IMR-90 (cell line): ENCODE measurements at regions of chr3 and their contacts with region 1.

Region 1: DNA sequence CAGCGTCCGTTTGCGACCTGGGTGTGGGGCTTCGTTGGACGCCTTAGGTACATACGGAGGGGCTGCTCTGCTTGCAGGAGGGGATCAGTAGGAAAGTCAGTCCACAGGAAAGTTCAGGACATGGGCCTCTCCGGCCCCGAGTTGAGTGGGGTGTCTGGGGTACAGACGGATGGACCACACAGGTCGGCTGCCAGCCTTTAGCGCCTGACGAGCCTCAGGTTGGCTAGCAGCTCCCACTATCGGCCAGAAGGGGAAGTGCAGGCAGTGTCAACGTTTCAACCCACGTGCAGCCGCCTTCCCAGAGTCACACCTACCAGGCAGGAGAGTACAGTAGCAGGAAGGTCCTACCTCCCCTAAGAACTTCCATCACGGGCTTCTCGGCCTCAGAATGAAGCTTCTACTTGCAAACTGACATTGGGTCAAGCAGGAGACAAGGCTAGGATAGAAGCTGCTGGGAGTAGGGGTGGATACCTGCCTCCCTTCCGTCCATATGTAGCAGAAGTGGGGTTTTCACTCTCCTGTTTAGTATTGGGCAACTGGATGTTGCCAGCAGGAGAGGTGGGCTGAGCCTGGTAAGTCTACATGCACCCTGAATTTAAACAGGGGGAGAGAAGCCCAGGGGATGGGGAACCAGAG is 1.8 kb upstream of the SCN5A start:
- DNase-seq: peak; percentile 52
- ATAC-seq: peak; percentile 59
- H3K4me3 ChIP-seq: no peak overlapping the region
- H3K27ac ChIP-seq: no peak overlapping the region
- H3K4me1 ChIP-seq: peaks cover 3% of the 10 kb centered on the region
- H3K27me3 ChIP-seq: peaks cover 11% of the 10 kb centered on the region
- CTCF ChIP-seq: peak; percentile 93
- POLR2A ChIP-seq: no peak
- RAD21 ChIP-seq: peak; percentile 85

Region 2: GRCh38 chr3:38354588-38355330 is 296.5 kb before region 1 on chr3:
- CTCF ChIA-PET with region 1: no interaction called
- POLR2A ChIA-PET with region 1: no interaction called
- dilution Hi-C with region 1: no loop called
- in situ Hi-C with region 1: no loop called
- intact Hi-C with region 1: loop called (anchors 10 kb)
- DNase-seq: peak; percentile 68
- ATAC-seq: no peak
- H3K4me3 ChIP-seq: no peak overlapping the region
- H3K27ac ChIP-seq: no peak overlapping the region
- H3K4me1 ChIP-seq: no peaks in the 10 kb centered on the region
- H3K27me3 ChIP-seq: no peaks in the 10 kb centered on the region
- CTCF ChIP-seq: no peak
- POLR2A ChIP-seq: no peak
- RAD21 ChIP-seq: no peak

Region 3: GRCh38 chr3:38496131-38496910 is 155.0 kb before region 1 on chr3 and contains the start of gene EXOG:
- CTCF ChIA-PET with region 1: interaction called, 5 read pairs
- POLR2A ChIA-PET with region 1: no interaction called
- dilution Hi-C with region 1: no loop called
- in situ Hi-C with region 1: no loop called
- intact Hi-C with region 1: loop called (anchors 1 kb)
- DNase-seq: peak; percentile 89
- ATAC-seq: peak; percentile 85
- H3K4me3 ChIP-seq: peak within 1 kb of the TSS; percentile 91
- H3K27ac ChIP-seq: peak within 1 kb of the TSS; percentile 91
- H3K4me1 ChIP-seq: peaks cover 11% of the 10 kb centered on the region
- H3K27me3 ChIP-seq: no peaks in the 10 kb centered on the region
- CTCF ChIP-seq: peak; percentile 84
- POLR2A ChIP-seq: 0 out of 2 replicates have a peak, but pooled peaks have one; percentile 20
- RAD21 ChIP-seq: peak; percentile 68
- total RNA-seq, gene EXOG: 10.2 and 12.8 TPM in 2 replicates

Region 4: GRCh38 chr3:38538773-38539353 is 112.4 kb before region 1 on chr3:
- CTCF ChIA-PET with region 1: no interaction called
- POLR2A ChIA-PET with region 1: no interaction called
- dilution Hi-C with region 1: no loop called
- in situ Hi-C with region 1: loop called (anchors 5 kb)
- intact Hi-C with region 1: no loop called
- DNase-seq: no peak
- ATAC-seq: peak; percentile 21; the same call in 1 of the 2 replicates
- H3K4me3 ChIP-seq: no peak overlapping the region
- H3K27ac ChIP-seq: no peak overlapping the region
- H3K4me1 ChIP-seq: peaks cover 2% of the 10 kb centered on the region; the same call in 1 of the 2 replicates
- H3K27me3 ChIP-seq: no peaks in the 10 kb centered on the region
- CTCF ChIP-seq: no peak
- POLR2A ChIP-seq: no peak
- RAD21 ChIP-seq: no peak

Region 5: GRCh38 chr3:38730281-38730680 is 79.0 kb after region 1 on chr3:
- CTCF ChIA-PET with region 1: no interaction called
- POLR2A ChIA-PET with region 1: no interaction called
- dilution Hi-C with region 1: no loop called
- in situ Hi-C with region 1: no loop called
- intact Hi-C with region 1: no loop called
- DNase-seq: peak; percentile 91
- ATAC-seq: peak; percentile 59
- H3K4me3 ChIP-seq: no peak overlapping the region
- H3K27ac ChIP-seq: no peak overlapping the region
- H3K4me1 ChIP-seq: peaks cover 11% of the 10 kb centered on the region; the same call in 1 of the 2 replicates
- H3K27me3 ChIP-seq: no peaks in the 10 kb centered on the region; the same call in 1 of the 2 replicates
- CTCF ChIP-seq: no peak
- POLR2A ChIP-seq: no peak
- RAD21 ChIP-seq: no peak

Region 6: DNA sequence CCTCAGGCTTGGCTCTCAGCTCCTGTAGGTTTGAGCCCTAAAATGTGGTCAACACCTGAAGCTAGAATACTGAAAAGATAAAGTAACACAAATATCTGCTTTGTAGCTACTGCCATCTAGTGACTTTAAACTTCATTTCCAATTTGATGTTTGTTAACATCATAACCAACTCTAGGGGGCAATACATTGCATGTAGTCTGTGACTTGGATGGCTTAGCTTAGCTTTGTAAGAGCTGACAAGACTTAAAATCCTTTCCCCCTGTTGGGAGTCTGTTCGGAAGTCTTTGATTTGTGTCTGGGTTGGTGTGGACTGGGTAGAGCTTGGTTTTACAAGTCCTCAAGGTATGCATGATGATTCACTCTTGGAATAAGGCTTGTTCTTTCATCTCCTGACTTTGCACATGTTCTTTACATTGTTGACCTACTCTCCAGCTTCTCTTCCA is 348.8 kb after region 1 on chr3:
- CTCF ChIA-PET with region 1: interaction called, 9 read pairs
- POLR2A ChIA-PET with region 1: no interaction called
- dilution Hi-C with region 1: no loop called
- in situ Hi-C with region 1: no loop called
- intact Hi-C with region 1: loop called (anchors 2 kb)
- DNase-seq: peak; percentile 79
- ATAC-seq: peak; percentile 78
- H3K4me3 ChIP-seq: no peak overlapping the region
- H3K27ac ChIP-seq: no peak overlapping the region
- H3K4me1 ChIP-seq: peaks cover 1% of the 10 kb centered on the region; the same call in 1 of the 2 replicates
- H3K27me3 ChIP-seq: no peaks in the 10 kb centered on the region
- CTCF ChIP-seq: peak; percentile 99
- POLR2A ChIP-seq: peak; percentile 29; the same call in 1 of the 2 replicates
- RAD21 ChIP-seq: peak; percentile 87